ENCODE measurements at regions of chr20 and their contacts with region 1.

Region 1: DNA sequence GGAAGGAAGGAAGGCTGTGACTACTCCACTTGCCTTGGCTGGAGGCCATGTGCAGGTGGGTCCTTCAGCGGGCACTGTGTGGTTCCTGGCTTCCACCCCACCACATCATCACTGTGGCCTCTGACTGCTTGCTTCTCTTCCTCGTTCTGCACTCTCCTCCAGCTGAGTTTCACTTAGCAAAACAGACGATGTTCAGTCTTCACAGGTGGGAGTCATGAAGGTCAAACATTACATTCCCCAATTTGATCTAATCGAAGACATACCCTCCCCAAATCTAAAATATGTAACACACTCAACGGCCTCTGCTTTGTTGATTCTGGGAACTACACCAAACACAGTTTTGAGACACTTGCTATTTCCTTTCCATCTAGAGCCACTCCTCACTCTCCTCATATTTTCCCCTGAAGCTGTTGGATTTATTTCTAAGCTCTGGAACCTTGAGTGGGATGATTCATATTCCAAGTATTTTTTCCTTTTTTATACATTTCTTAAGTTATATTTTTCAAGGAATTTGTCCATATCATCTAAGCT is 132.5 kb upstream of the FOXA2 start:
- DNase-seq: peak; percentile 68
- H3K4me3 ChIP-seq: no peak overlapping the region
- H3K27ac ChIP-seq: peak overlapping the region; percentile 59
- H3K4me1 ChIP-seq: peaks cover 39% of the 10 kb centered on the region
- H3K27me3 ChIP-seq: no peaks in the 10 kb centered on the region
- CTCF ChIP-seq: no peak
- POLR2A ChIP-seq: no peak

Region 2: GRCh38 chr20:22700367-22700766 is 16.5 kb before region 1 on chr20:
- CTCF ChIA-PET with region 1: interaction called, 8 read pairs
- POLR2A ChIA-PET with region 1: no interaction called
- dilution Hi-C with region 1: no loop called
- intact Hi-C with region 1: loop called (anchors 2 kb)
- DNase-seq: no peak
- H3K4me3 ChIP-seq: no peak overlapping the region
- H3K27ac ChIP-seq: no peak overlapping the region
- H3K4me1 ChIP-seq: peaks cover 14% of the 10 kb centered on the region
- H3K27me3 ChIP-seq: no peaks in the 10 kb centered on the region
- CTCF ChIP-seq: no peak
- POLR2A ChIP-seq: no peak

Region 3: DNA sequence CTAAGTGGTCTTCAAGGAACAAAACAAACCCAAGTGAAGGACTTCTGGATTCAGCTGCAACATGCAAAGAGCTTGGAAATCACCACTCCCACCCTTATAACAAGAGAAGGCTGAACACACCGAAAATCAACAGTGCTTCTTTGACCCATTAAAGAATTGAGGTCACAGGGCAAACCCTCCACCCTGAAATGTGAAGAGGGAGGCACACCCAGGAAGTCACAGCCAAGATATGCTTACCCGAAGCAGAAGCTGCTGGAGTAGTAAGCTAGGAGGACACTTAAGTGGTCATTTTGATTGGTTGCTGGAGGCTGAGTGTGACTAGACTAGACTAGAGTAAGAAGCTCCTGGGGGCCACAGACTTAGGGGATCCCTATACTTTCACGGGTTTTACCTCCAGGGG is 130.0 kb after region 1 on chr20:
- CTCF ChIA-PET with region 1: interaction called, 17 read pairs
- POLR2A ChIA-PET with region 1: no interaction called
- dilution Hi-C with region 1: no loop called
- intact Hi-C with region 1: no loop called
- DNase-seq: no peak
- H3K4me3 ChIP-seq: no peak overlapping the region
- H3K27ac ChIP-seq: no peak overlapping the region
- H3K4me1 ChIP-seq: peaks cover 4% of the 10 kb centered on the region
- H3K27me3 ChIP-seq: peaks cover 1 to 5% of the 10 kb centered on the region in 2 experiments
- CTCF ChIP-seq: no peak
- POLR2A ChIP-seq: no peak

Region 4: GRCh38 chr20:22887796-22888195 is 170.9 kb after region 1 on chr20:
- CTCF ChIA-PET with region 1: no interaction called
- POLR2A ChIA-PET with region 1: no interaction called
- dilution Hi-C with region 1: no loop called
- intact Hi-C with region 1: no loop called
- DNase-seq: no peak
- H3K4me3 ChIP-seq: no peak overlapping the region
- H3K27ac ChIP-seq: no peak overlapping the region
- H3K4me1 ChIP-seq: no peaks in the 10 kb centered on the region
- H3K27me3 ChIP-seq: peaks cover 0 to 4% of the 10 kb centered on the region in 2 experiments
- CTCF ChIP-seq: no peak
- POLR2A ChIP-seq: no peak